CD8-positive, alpha-beta T cell (primary cell): ENCODE measurements at regions of chr7 and their contacts with region 1.

Region 1: GRCh38 chr7:7103343-7104313 is 78.7 kb upstream of the C1GALT1 start:
- DNase-seq: peak in 3 of 9 experiments; percentile 50 to 81 (median 73)
- ATAC-seq: peak; percentile 71
- H3K4me3 ChIP-seq: no peak overlapping the region
- H3K4me3 Mint-ChIP-seq: no peak overlapping the region
- H3K27ac ChIP-seq: no peak overlapping the region
- H3K27ac Mint-ChIP-seq: no peak overlapping the region
- H3K4me1 ChIP-seq: peaks cover 17% of the 10 kb centered on the region
- H3K4me1 Mint-ChIP-seq: peaks cover 20% of the 10 kb centered on the region
- H3K27me3 ChIP-seq: no peaks in the 10 kb centered on the region
- H3K27me3 Mint-ChIP-seq: no peaks in the 10 kb centered on the region
- CTCF ChIP-seq: peak; percentile 68

Region 2: GRCh38 chr7:6536262-6537260 is 567.1 kb before region 1 on chr7:
- CTCF ChIA-PET with region 1: no interaction called
- POLR2A ChIA-PET with region 1: no interaction called
- intact Hi-C with region 1: no loop called
- DNase-seq: peak in 1 of 9 experiments; percentile 28
- ATAC-seq: peak; percentile 46
- H3K4me3 ChIP-seq: no peak overlapping the region
- H3K4me3 Mint-ChIP-seq: peak overlapping the region; percentile 26
- H3K27ac ChIP-seq: no peak overlapping the region
- H3K27ac Mint-ChIP-seq: no peak overlapping the region
- H3K4me1 ChIP-seq: peaks cover 8% of the 10 kb centered on the region
- H3K4me1 Mint-ChIP-seq: peaks cover 7% of the 10 kb centered on the region
- H3K27me3 ChIP-seq: peaks cover 3 to 5% of the 10 kb centered on the region in 2 experiments
- H3K27me3 Mint-ChIP-seq: peaks cover 24% of the 10 kb centered on the region
- CTCF ChIP-seq: no peak

Region 3: DNA sequence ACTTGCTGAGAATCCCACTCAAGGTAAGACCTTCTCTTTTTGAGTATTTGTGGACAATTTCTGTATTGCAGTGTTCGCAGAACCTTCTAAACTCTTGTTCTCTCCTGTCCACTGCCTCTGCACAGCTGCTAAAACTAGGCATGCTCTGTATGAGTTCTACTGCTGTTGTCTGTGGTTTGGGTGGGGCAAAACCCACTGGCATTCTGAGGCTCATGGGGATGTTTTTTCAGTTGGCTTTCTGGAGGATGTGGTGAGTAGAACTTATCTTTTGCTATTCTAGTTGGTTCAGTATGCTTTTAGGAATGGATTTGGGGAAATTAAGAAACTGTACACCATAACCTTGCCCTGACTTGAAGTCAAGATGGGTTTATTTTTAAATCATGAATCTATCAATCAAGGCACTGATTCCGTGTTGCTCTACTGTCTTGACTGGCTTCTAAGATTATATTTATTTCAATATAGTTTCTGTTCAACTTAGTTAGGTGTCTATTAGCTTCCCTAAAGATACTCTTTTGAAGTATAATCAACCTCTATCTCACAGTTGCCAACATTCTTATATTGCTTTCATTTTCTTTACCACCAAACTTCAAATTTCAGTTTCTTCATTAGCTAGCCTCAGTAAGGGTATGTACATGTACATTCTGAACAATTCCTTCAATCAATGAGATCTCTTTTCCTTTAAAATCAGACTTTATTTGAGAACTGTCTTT is 53.7 kb after region 1 on chr7:
- CTCF ChIA-PET with region 1: interaction called, 6 read pairs
- POLR2A ChIA-PET with region 1: interaction called, 4 read pairs
- intact Hi-C with region 1: loop called in 1 of 2 experiments (anchors 5 kb)
- DNase-seq: peak; percentile 23 to 88 (median 68)
- ATAC-seq: peak; percentile 94
- H3K4me3 ChIP-seq: peak overlapping the region; percentile 39 to 42
- H3K4me3 Mint-ChIP-seq: peak overlapping the region; percentile 75
- H3K27ac ChIP-seq: peak overlapping the region; percentile 32 to 68
- H3K27ac Mint-ChIP-seq: peak overlapping the region; percentile 85
- H3K4me1 ChIP-seq: peaks cover 58% of the 10 kb centered on the region
- H3K4me1 Mint-ChIP-seq: peaks cover 61% of the 10 kb centered on the region
- H3K27me3 ChIP-seq: no peaks in the 10 kb centered on the region
- H3K27me3 Mint-ChIP-seq: no peaks in the 10 kb centered on the region
- CTCF ChIP-seq: no peak

Region 4: DNA sequence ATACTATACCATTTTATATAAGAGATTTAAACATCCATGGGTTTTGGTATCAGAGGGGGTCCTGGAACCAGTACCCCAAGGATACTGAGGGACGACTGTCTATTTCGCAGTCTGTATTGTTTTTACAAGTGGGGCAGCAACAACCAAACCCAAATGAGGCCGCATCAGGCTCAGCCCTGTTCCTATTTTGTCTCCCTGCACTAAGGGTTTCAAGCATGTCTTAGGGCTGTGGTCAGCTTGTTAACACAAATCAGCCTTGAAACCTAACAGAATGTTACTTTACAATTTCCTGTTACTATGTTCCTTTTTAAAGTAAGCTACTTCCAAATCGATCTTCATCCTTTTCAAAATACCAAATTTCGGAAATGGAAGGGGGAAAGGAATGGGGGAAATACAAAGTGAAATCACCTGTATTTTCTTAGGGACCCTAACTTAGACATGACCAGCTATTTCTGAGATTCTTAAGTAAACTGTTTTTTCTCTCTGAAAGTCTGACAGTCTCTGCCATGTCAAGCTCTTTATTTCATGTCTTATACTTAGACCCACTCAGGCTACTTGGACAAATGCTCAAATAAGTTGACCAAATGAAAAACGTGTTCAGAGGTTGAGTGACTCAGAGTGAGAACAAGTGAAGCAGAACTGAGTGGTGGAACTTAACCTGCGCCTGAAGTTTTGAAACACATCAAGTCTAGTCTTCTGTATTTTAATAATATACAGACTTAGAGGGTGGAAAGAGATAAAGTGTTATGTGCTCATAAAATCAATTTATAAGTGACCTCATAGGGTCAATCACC is 154.5 kb after region 1 on chr7:
- CTCF ChIA-PET with region 1: interaction called, 12 read pairs
- POLR2A ChIA-PET with region 1: no interaction called
- intact Hi-C with region 1: loop called in 1 of 2 experiments (anchors 10 kb)
- DNase-seq: peak in 2 of 9 experiments; percentile 42 to 63
- ATAC-seq: peak; percentile 54
- H3K4me3 ChIP-seq: peak overlapping the region in 1 of 2 experiments; percentile 58
- H3K4me3 Mint-ChIP-seq: peak overlapping the region; percentile 70
- H3K27ac ChIP-seq: peak overlapping the region; percentile 64 to 95
- H3K27ac Mint-ChIP-seq: peak overlapping the region; percentile 88
- H3K4me1 ChIP-seq: peaks cover 27% of the 10 kb centered on the region
- H3K4me1 Mint-ChIP-seq: peaks cover 41% of the 10 kb centered on the region
- H3K27me3 ChIP-seq: no peaks in the 10 kb centered on the region
- H3K27me3 Mint-ChIP-seq: no peaks in the 10 kb centered on the region
- CTCF ChIP-seq: no peak

Region 5: DNA sequence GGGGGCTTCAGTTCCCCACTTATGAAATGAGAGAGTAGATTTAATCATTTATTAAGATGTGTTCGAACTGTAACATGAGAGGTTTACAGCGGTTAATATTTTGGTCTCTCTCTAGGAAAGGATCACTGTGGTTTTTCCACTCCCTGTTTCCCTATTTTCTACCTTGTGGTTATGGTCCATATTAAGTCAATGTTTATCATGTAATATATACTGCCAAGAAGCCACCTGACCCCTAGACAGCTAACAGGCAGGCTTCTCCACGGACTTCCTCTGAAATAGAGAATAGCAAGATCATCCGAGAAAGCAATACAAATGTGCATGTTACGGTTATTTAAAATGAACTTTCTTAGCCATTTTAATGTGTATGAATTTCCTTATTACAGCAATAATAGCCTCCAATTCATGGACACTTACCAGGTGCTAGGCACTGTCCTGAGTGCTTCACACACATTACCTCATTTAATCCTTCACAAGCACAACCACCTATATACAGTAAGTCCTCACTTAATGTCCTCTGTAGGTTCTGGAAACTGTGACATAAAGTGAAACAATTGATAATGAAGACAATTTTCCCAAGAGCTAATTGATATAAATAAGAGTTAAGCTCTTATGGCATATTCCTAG is 432.9 kb after region 1 on chr7:
- CTCF ChIA-PET with region 1: interaction called, 61 read pairs
- POLR2A ChIA-PET with region 1: interaction called, 6 read pairs
- intact Hi-C with region 1: loop called (anchors 1 kb)
- DNase-seq: no peak
- ATAC-seq: no peak
- H3K4me3 ChIP-seq: no peak overlapping the region
- H3K4me3 Mint-ChIP-seq: no peak overlapping the region
- H3K27ac ChIP-seq: no peak overlapping the region
- H3K27ac Mint-ChIP-seq: no peak overlapping the region
- H3K4me1 ChIP-seq: no peaks in the 10 kb centered on the region
- H3K4me1 Mint-ChIP-seq: peaks cover 1% of the 10 kb centered on the region
- H3K27me3 ChIP-seq: no peaks in the 10 kb centered on the region
- H3K27me3 Mint-ChIP-seq: peaks cover 3% of the 10 kb centered on the region
- CTCF ChIP-seq: no peak

Region 6: GRCh38 chr7:7761340-7761980 is 657.8 kb after region 1 on chr7:
- CTCF ChIA-PET with region 1: interaction called, 3 read pairs
- POLR2A ChIA-PET with region 1: no interaction called
- intact Hi-C with region 1: loop called (anchors 5 kb)
- DNase-seq: peak in 2 of 9 experiments; percentile 61 to 68
- ATAC-seq: peak; percentile 24
- H3K4me3 ChIP-seq: peak overlapping the region; percentile 49 to 52
- H3K4me3 Mint-ChIP-seq: peak overlapping the region; percentile 93
- H3K27ac ChIP-seq: peak overlapping the region; percentile 52 to 80
- H3K27ac Mint-ChIP-seq: peak overlapping the region; percentile 98
- H3K4me1 ChIP-seq: peaks cover 29% of the 10 kb centered on the region
- H3K4me1 Mint-ChIP-seq: peaks cover 46% of the 10 kb centered on the region
- H3K27me3 ChIP-seq: no peaks in the 10 kb centered on the region
- H3K27me3 Mint-ChIP-seq: no peaks in the 10 kb centered on the region
- CTCF ChIP-seq: peak; percentile 46

Region 7: GRCh38 chr7:7772397-7772821 is 668.8 kb after region 1 on chr7:
- CTCF ChIA-PET with region 1: no interaction called
- POLR2A ChIA-PET with region 1: no interaction called
- intact Hi-C with region 1: no loop called
- DNase-seq: peak in 1 of 9 experiments; percentile 9
- ATAC-seq: peak; percentile 34
- H3K4me3 ChIP-seq: no peak overlapping the region
- H3K4me3 Mint-ChIP-seq: peak overlapping the region; percentile 69
- H3K27ac ChIP-seq: no peak overlapping the region
- H3K27ac Mint-ChIP-seq: peak overlapping the region; percentile 80
- H3K4me1 ChIP-seq: peaks cover 12% of the 10 kb centered on the region
- H3K4me1 Mint-ChIP-seq: peaks cover 31% of the 10 kb centered on the region
- H3K27me3 ChIP-seq: no peaks in the 10 kb centered on the region
- H3K27me3 Mint-ChIP-seq: no peaks in the 10 kb centered on the region
- CTCF ChIP-seq: no peak

Region 8: DNA sequence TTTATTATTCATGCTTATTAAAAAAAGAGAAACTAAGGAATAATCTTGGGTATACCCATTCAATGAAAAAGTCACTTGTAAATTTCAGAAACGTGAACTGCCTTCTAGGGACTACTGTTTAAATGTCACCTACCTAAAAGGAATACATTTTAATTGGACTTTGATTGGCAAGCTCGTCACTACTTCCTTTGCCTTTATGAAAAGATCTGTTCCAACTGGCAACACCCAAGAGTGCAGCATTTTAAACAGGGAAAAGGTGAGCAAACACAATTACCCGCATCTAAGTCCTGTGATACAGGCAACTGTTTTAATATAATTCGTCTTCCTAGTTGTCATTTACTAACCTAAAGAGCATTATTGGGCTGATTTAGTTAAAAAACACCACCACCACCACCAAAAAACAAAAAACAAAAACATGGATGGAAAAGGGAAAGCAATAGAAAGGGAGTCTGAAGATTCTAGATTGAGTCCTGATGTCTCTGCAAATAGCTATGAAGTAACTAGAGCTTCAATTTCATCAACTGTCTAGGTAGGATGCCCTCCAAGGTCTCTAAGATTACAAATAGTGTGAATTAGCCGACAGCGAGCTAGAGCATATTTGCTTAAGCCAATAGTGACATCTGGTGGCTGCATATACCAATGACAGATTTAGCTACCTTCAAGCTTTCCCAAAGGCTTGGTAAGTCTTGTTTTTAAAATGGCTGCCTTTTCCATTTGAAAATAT is 1192.2 kb after region 1 on chr7:
- CTCF ChIA-PET with region 1: no interaction called
- POLR2A ChIA-PET with region 1: no interaction called
- intact Hi-C with region 1: loop called (anchors 2 to 5 kb)
- DNase-seq: peak in 6 of 9 experiments; percentile 7 to 81 (median 22)
- ATAC-seq: peak; percentile 78
- H3K4me3 ChIP-seq: no peak overlapping the region
- H3K4me3 Mint-ChIP-seq: no peak overlapping the region
- H3K27ac ChIP-seq: no peak overlapping the region
- H3K27ac Mint-ChIP-seq: no peak overlapping the region
- H3K4me1 ChIP-seq: no peaks in the 10 kb centered on the region
- H3K4me1 Mint-ChIP-seq: no peaks in the 10 kb centered on the region
- H3K27me3 ChIP-seq: no peaks in the 10 kb centered on the region
- H3K27me3 Mint-ChIP-seq: peaks cover 11% of the 10 kb centered on the region
- CTCF ChIP-seq: peak; percentile 67